ENCODE measurements at regions of chr14 and their contacts with region 1.

Region 1: DNA sequence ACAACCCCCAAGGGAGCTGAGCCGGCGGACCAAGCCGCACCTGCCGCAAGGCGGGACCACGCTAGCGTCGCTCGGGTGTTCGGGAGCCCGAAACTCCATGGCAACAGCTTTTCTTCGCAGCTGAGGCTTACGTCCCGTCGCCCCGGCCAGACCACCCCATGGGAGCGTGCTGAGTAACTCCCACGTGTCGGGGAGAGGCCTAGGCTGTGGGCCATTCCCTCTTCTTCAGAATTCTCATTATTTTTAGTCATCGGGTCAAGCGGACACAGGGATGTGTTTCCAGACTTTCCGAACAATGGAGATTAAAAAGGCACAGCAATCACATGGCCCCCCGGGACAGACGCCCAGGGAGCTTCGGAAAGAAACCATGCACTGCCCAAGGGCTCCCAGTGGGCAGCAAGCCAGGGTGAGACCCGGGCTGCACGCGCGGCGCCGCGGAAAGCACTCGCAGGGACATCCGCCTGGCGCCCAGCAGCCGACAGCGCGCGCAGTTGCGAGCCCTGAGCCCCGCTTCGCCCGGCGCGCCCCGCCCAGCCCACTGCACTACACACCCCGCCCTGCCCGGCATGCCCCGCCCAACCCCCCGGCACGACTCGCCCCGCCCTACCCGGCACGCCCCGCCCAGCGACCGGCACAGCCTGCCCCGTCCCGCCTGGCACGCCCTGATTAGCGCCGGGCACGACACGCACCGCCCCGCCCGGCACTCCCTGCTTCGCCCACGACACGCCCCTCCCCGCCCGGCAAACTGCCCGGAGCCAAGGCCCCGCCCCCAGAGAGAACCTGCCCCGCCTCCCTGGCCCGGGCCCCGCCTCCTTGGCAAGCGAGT is 422 bp upstream of the AK7 start:
- DNase-seq: peak; percentile 99
- ATAC-seq: peak; percentile 97
- H3K4me3 Mint-ChIP-seq: peak overlapping the region; percentile 89
- H3K27ac Mint-ChIP-seq: peak overlapping the region; percentile 87
- H3K4me1 Mint-ChIP-seq: peaks cover 6% of the 10 kb centered on the region
- H3K27me3 Mint-ChIP-seq: peaks cover 9% of the 10 kb centered on the region
- CTCF ChIP-seq: no peak

Region 2: GRCh38 chr14:96362965-96363756 is 28.3 kb before region 1 on chr14 and contains the starts of genes ATG2B and GSKIP:
- CTCF ChIA-PET with region 1: no interaction called
- POLR2A ChIA-PET with region 1: interaction called, 12 read pairs
- intact Hi-C with region 1: loop called (anchors 2 kb)
- DNase-seq: peak; percentile 96
- ATAC-seq: peak; percentile 81
- H3K4me3 Mint-ChIP-seq: peak within 1 kb of the TSS; percentile 88
- H3K27ac Mint-ChIP-seq: peak within 1 kb of the TSS; percentile 91
- H3K4me1 Mint-ChIP-seq: peaks cover 49% of the 10 kb centered on the region
- H3K27me3 Mint-ChIP-seq: no peaks in the 10 kb centered on the region
- CTCF ChIP-seq: no peak
- total RNA-seq, gene ATG2B: 12.9 to 13.3 TPM
- total RNA-seq, gene GSKIP: 21.8 to 21.9 TPM

Region 3: GRCh38 chr14:96380735-96381134 is 10.8 kb before region 1 on chr14:
- CTCF ChIA-PET with region 1: interaction called, 7 read pairs
- POLR2A ChIA-PET with region 1: interaction called, 15 read pairs
- intact Hi-C with region 1: no loop called
- DNase-seq: peak; percentile 16
- ATAC-seq: no peak
- H3K4me3 Mint-ChIP-seq: no peak overlapping the region
- H3K27ac Mint-ChIP-seq: no peak overlapping the region
- H3K4me1 Mint-ChIP-seq: peaks cover 4% of the 10 kb centered on the region
- H3K27me3 Mint-ChIP-seq: no peaks in the 10 kb centered on the region
- CTCF ChIP-seq: no peak